Brain microvascular endothelial cell (primary cell): ENCODE measurements at regions of chr10 and their contacts with region 1.

Region 1: GRCh38 chr10:70549962-70550458 is 52.5 kb downstream of the PRF1 start:
- DNase-seq: peak; percentile 48
- H3K4me3 ChIP-seq: no peak overlapping the region
- H3K27ac ChIP-seq: no peak overlapping the region
- H3K27me3 ChIP-seq: no peaks in the 10 kb centered on the region
- CTCF ChIP-seq: peak; percentile 89

Region 2: DNA sequence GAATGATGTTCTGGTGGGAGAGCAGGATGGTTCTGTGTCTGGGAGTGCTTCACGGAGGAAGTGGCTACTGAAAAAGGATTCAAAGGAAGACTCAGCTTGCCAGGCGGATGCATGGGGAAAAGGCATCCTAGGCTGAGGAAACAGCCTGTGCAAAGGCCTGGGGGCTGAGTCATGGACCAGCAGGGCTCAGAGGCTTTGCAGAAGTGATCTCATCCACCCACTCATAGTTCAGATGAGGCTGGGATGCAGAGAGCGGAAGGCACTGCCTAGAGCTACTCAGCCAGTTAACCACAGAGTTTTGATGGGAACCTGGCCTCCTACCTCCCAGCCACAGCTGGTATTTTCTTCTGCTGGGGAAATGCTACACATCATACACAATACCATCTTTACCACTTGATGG is 106.5 kb after region 1 on chr10:
- in situ Hi-C with region 1: loop called (anchors 25 kb)
- DNase-seq: peak; percentile 99
- H3K4me3 ChIP-seq: no peak overlapping the region
- H3K27ac ChIP-seq: peak overlapping the region; percentile 94
- H3K27me3 ChIP-seq: no peaks in the 10 kb centered on the region
- CTCF ChIP-seq: no peak

Region 3: GRCh38 chr10:70758757-70759514 is 208.9 kb after region 1 on chr10:
- in situ Hi-C with region 1: loop called (anchors 25 kb)
- DNase-seq: peak; percentile 69
- H3K4me3 ChIP-seq: no peak overlapping the region
- H3K27ac ChIP-seq: no peak overlapping the region
- H3K27me3 ChIP-seq: no peaks in the 10 kb centered on the region
- CTCF ChIP-seq: peak; percentile 88

Region 4: GRCh38 chr10:70880077-70880534 is 330.1 kb after region 1 on chr10:
- in situ Hi-C with region 1: no loop called
- DNase-seq: peak; percentile 73
- H3K4me3 ChIP-seq: no peak overlapping the region
- H3K27ac ChIP-seq: no peak overlapping the region
- H3K27me3 ChIP-seq: no peaks in the 10 kb centered on the region
- CTCF ChIP-seq: peak; percentile 92